Naive thymus-derived CD4-positive, alpha-beta T cell (primary cell): ENCODE measurements at regions of chrX and their contacts with region 1.

Region 1: GRCh38 chrX:42943051-42943974 is 165.3 kb upstream of the PPP1R2C start:
- DNase-seq: peak in 6 of 9 donors; percentile 22 to 50 (median 44)
- ATAC-seq: peak; percentile 60
- H3K4me3 ChIP-seq: peak overlapping the region; percentile 33
- H3K4me3 Mint-ChIP-seq: peak overlapping the region; percentile 41 to 83 (median 70)
- H3K27ac ChIP-seq: peak overlapping the region; percentile 56
- H3K27ac Mint-ChIP-seq: peak overlapping the region; percentile 77 to 98 (median 94)
- H3K4me1 ChIP-seq: peaks cover 58 to 84% of the 10 kb centered on the region in 2 donors
- H3K4me1 Mint-ChIP-seq: peaks cover 21 to 98% (median 88%) of the 10 kb centered on the region in 7 donors
- H3K27me3 ChIP-seq: no peaks in the 10 kb centered on the region
- H3K27me3 Mint-ChIP-seq: no peaks in the 10 kb centered on the region

Region 2: DNA sequence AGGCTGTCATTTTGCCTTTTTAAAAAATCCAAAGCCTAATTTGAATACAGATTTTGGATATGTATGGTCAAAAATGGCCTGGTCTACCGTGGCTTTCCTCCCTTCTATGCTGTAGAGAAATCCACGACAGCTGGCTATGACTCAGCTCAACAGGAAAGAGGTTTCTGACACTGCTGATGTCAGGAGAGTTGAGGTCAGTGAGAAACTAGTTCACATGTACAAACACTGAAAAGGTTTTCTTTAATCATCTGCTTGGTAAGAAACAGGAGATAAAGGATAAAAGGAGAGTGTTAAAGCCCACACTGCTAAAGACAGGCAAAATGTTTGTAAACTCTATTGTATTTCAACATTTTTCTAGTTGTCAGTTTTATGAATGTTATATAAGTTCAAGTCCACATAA is 1382.3 kb before region 1 on chrX:
- CTCF ChIA-PET with region 1: no interaction called
- POLR2A ChIA-PET with region 1: no interaction called
- intact Hi-C with region 1: loop called in 1 of 2 experiments (anchors 5 kb)
- DNase-seq: peak in 1 of 9 donors; percentile 24
- ATAC-seq: peak; percentile 82
- H3K4me3 ChIP-seq: no peak overlapping the region
- H3K4me3 Mint-ChIP-seq: peak overlapping the region in 1 of 10 donors; percentile 50
- H3K27ac ChIP-seq: no peak overlapping the region
- H3K27ac Mint-ChIP-seq: peak overlapping the region in 1 of 9 donors; percentile 81
- H3K4me1 ChIP-seq: peaks cover 0 to 25% of the 10 kb centered on the region in 2 donors
- H3K4me1 Mint-ChIP-seq: peaks cover 7 to 47% (median 29%) of the 10 kb centered on the region in 7 donors
- H3K27me3 ChIP-seq: no peaks in the 10 kb centered on the region
- H3K27me3 Mint-ChIP-seq: no peaks in the 10 kb centered on the region

Region 3: GRCh38 chrX:41796577-41796976 is 1146.7 kb before region 1 on chrX:
- CTCF ChIA-PET with region 1: interaction called, 11 read pairs
- POLR2A ChIA-PET with region 1: interaction called, 5 read pairs
- intact Hi-C with region 1: loop called in 1 of 2 experiments (anchors 1 kb)
- DNase-seq: no peak
- ATAC-seq: no peak
- H3K4me3 ChIP-seq: no peak overlapping the region
- H3K4me3 Mint-ChIP-seq: no peak overlapping the region
- H3K27ac ChIP-seq: no peak overlapping the region
- H3K27ac Mint-ChIP-seq: peak overlapping the region in 2 of 9 donors; percentile 34 to 62
- H3K4me1 ChIP-seq: peaks cover 0 to 4% of the 10 kb centered on the region in 2 donors
- H3K4me1 Mint-ChIP-seq: peaks cover 6 to 34% (median 14%) of the 10 kb centered on the region in 7 donors
- H3K27me3 ChIP-seq: no peaks in the 10 kb centered on the region
- H3K27me3 Mint-ChIP-seq: no peaks in the 10 kb centered on the region

Region 4: GRCh38 chrX:41923257-41923969 is 1019.9 kb before region 1 on chrX and contains the start of gene CASK:
- CTCF ChIA-PET with region 1: no interaction called
- POLR2A ChIA-PET with region 1: interaction called, 10 read pairs
- intact Hi-C with region 1: loop called (anchors 2 to 5 kb)
- DNase-seq: peak; percentile 74 to 91 (median 84)
- ATAC-seq: peak; percentile 92
- H3K4me3 ChIP-seq: peak within 1 kb of the TSS; percentile 78
- H3K4me3 Mint-ChIP-seq: peak within 1 kb of the TSS; percentile 91 to 99 (median 92)
- H3K27ac ChIP-seq: peak within 1 kb of the TSS; percentile 70
- H3K27ac Mint-ChIP-seq: peak within 1 kb of the TSS; percentile 76 to 95 (median 91)
- H3K4me1 ChIP-seq: peaks cover 5% of the 10 kb centered on the region in 2 donors
- H3K4me1 Mint-ChIP-seq: peaks cover 6 to 39% (median 29%) of the 10 kb centered on the region in 7 donors
- H3K27me3 ChIP-seq: no peaks in the 10 kb centered on the region
- H3K27me3 Mint-ChIP-seq: peaks cover 0 to 2% (median 0%) of the 10 kb centered on the region in 5 donors
- total RNA-seq, gene CASK: 31.5 to 72.4 (median 65.0) TPM

Region 5: GRCh38 chrX:42290608-42291007 is 652.7 kb before region 1 on chrX:
- CTCF ChIA-PET with region 1: no interaction called
- POLR2A ChIA-PET with region 1: no interaction called
- intact Hi-C with region 1: loop called in 1 of 2 experiments (anchors 5 kb)
- DNase-seq: peak in 1 of 9 donors; percentile 0
- ATAC-seq: no peak
- H3K4me3 ChIP-seq: no peak overlapping the region
- H3K4me3 Mint-ChIP-seq: no peak overlapping the region
- H3K27ac ChIP-seq: no peak overlapping the region
- H3K27ac Mint-ChIP-seq: no peak overlapping the region
- H3K4me1 ChIP-seq: no peaks in the 10 kb centered on the region
- H3K4me1 Mint-ChIP-seq: peaks cover 0 to 7% (median 0%) of the 10 kb centered on the region in 7 donors
- H3K27me3 ChIP-seq: no peaks in the 10 kb centered on the region
- H3K27me3 Mint-ChIP-seq: no peaks in the 10 kb centered on the region

Region 6: DNA sequence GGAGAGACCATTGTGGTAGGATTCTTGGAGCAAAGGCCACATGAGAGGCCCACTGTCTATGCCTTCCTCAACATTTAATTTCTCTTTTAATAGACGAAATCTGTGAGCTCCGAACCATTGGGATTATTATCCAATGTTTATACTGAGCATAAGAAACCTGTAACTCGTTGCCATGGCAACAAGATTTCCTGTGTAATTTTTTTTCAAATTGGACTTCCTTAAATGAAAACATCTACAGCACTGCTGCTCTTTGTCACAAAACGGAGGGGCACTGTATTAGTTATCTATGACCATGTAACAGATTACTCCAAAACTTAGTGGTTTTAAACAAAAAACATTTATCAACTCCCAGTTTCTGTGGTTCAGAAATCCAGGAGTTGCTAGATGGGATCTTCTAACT is 204.1 kb before region 1 on chrX:
- CTCF ChIA-PET with region 1: no interaction called
- POLR2A ChIA-PET with region 1: no interaction called
- intact Hi-C with region 1: loop called in 1 of 2 experiments (anchors 5 kb)
- DNase-seq: peak in 5 of 9 donors; percentile 18 to 51 (median 40)
- ATAC-seq: no peak
- H3K4me3 ChIP-seq: no peak overlapping the region
- H3K4me3 Mint-ChIP-seq: peak overlapping the region in 7 of 10 donors; percentile 23 to 64 (median 36)
- H3K27ac ChIP-seq: peak overlapping the region; percentile 10
- H3K27ac Mint-ChIP-seq: peak overlapping the region in 8 of 9 donors; percentile 62 to 90 (median 80)
- H3K4me1 ChIP-seq: peaks cover 0 to 4% of the 10 kb centered on the region in 2 donors
- H3K4me1 Mint-ChIP-seq: peaks cover 0 to 31% (median 25%) of the 10 kb centered on the region in 7 donors
- H3K27me3 ChIP-seq: no peaks in the 10 kb centered on the region
- H3K27me3 Mint-ChIP-seq: no peaks in the 10 kb centered on the region

Region 7: DNA sequence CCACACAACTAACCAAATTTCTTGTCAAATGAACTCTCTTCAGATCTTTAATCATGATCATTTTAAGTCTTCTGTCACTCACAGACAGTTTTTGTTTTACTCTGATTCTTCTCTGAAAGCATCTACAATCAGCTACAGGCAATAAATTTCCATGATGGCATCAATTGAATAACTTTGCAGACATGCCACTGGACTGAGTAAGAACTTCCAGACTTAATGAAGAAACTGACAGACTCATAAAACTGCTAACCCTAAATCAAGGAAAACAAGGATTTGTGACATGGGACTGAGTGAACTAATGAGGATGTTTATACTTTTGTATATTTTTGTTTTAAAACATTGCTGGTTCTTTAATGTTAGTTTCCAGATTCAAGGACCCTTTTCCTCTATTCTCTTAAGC is 159.9 kb before region 1 on chrX:
- CTCF ChIA-PET with region 1: no interaction called
- POLR2A ChIA-PET with region 1: no interaction called
- intact Hi-C with region 1: no loop called
- DNase-seq: no peak
- ATAC-seq: no peak
- H3K4me3 ChIP-seq: no peak overlapping the region
- H3K4me3 Mint-ChIP-seq: no peak overlapping the region
- H3K27ac ChIP-seq: no peak overlapping the region
- H3K27ac Mint-ChIP-seq: no peak overlapping the region
- H3K4me1 ChIP-seq: no peaks in the 10 kb centered on the region
- H3K4me1 Mint-ChIP-seq: peaks cover 0 to 5% (median 0%) of the 10 kb centered on the region in 7 donors
- H3K27me3 ChIP-seq: no peaks in the 10 kb centered on the region
- H3K27me3 Mint-ChIP-seq: no peaks in the 10 kb centered on the region

Region 8: DNA sequence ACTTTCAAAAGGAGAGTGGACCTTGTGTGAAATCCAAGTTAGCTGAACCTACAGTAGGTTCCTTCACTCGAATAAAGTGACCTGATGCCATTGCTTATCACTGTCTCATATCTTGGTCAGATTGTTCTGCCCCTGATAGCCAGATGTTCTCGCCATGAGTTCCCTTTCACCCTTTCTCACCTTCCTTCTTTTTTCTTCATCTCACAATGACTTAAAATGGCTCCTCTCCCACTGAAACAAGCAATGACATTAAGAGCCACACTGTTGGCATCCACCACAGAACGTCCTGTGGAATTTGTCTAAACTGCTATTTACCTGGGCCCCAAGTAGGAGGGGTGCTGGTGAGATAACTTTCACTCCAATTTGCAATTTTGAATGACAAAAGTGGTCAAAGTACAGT is 62.2 kb after region 1 on chrX:
- CTCF ChIA-PET with region 1: no interaction called
- POLR2A ChIA-PET with region 1: no interaction called
- intact Hi-C with region 1: no loop called
- DNase-seq: no peak
- ATAC-seq: no peak
- H3K4me3 ChIP-seq: no peak overlapping the region
- H3K4me3 Mint-ChIP-seq: no peak overlapping the region
- H3K27ac ChIP-seq: no peak overlapping the region
- H3K27ac Mint-ChIP-seq: no peak overlapping the region
- H3K4me1 ChIP-seq: no peaks in the 10 kb centered on the region
- H3K4me1 Mint-ChIP-seq: peaks cover 0 to 7% (median 0%) of the 10 kb centered on the region in 7 donors
- H3K27me3 ChIP-seq: no peaks in the 10 kb centered on the region
- H3K27me3 Mint-ChIP-seq: no peaks in the 10 kb centered on the region

Region 9: DNA sequence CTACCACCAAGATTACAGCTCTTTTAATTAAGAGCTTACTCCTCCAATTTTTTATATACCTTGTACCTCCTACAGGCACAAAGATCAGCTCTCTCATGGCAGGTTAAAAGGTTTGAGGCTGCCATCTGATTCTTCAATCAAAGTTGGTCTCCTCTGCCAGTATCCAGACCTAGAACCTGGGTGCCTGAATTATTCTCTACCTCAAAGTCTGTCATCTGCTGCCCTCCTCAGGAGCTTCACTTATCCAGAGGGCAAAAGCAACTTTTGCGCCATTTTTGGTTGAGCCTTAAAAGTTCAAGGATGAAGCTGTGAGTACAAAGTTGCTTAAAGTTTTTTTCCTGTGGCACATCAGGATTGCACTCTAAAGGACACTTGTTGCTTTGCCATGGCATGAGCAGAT is 178.3 kb after region 1 on chrX:
- CTCF ChIA-PET with region 1: no interaction called
- POLR2A ChIA-PET with region 1: no interaction called
- intact Hi-C with region 1: no loop called
- DNase-seq: peak in 5 of 9 donors; percentile 1 to 27 (median 15)
- ATAC-seq: no peak
- H3K4me3 ChIP-seq: no peak overlapping the region
- H3K4me3 Mint-ChIP-seq: no peak overlapping the region
- H3K27ac ChIP-seq: no peak overlapping the region
- H3K27ac Mint-ChIP-seq: peak overlapping the region in 1 of 9 donors; percentile 17
- H3K4me1 ChIP-seq: no peaks in the 10 kb centered on the region
- H3K4me1 Mint-ChIP-seq: peaks cover 0 to 8% (median 3%) of the 10 kb centered on the region in 7 donors
- H3K27me3 ChIP-seq: no peaks in the 10 kb centered on the region
- H3K27me3 Mint-ChIP-seq: no peaks in the 10 kb centered on the region

Region 10: GRCh38 chrX:43255596-43255995 is 312.3 kb after region 1 on chrX:
- CTCF ChIA-PET with region 1: no interaction called
- POLR2A ChIA-PET with region 1: no interaction called
- intact Hi-C with region 1: no loop called
- DNase-seq: no peak
- ATAC-seq: no peak
- H3K4me3 ChIP-seq: no peak overlapping the region
- H3K4me3 Mint-ChIP-seq: no peak overlapping the region
- H3K27ac ChIP-seq: no peak overlapping the region
- H3K27ac Mint-ChIP-seq: no peak overlapping the region
- H3K4me1 ChIP-seq: no peaks in the 10 kb centered on the region
- H3K4me1 Mint-ChIP-seq: no peaks in the 10 kb centered on the region
- H3K27me3 ChIP-seq: no peaks in the 10 kb centered on the region
- H3K27me3 Mint-ChIP-seq: no peaks in the 10 kb centered on the region

Region 11: GRCh38 chrX:43557792-43558191 is 614.5 kb after region 1 on chrX:
- CTCF ChIA-PET with region 1: no interaction called
- POLR2A ChIA-PET with region 1: no interaction called
- intact Hi-C with region 1: loop called in 1 of 2 experiments (anchors 1 kb)
- DNase-seq: peak; percentile 7 to 65 (median 40)
- ATAC-seq: peak; percentile 53
- H3K4me3 ChIP-seq: no peak overlapping the region
- H3K4me3 Mint-ChIP-seq: no peak overlapping the region
- H3K27ac ChIP-seq: no peak overlapping the region
- H3K27ac Mint-ChIP-seq: no peak overlapping the region
- H3K4me1 ChIP-seq: peaks cover 4% of the 10 kb centered on the region in 2 donors
- H3K4me1 Mint-ChIP-seq: peaks cover 0 to 6% (median 0%) of the 10 kb centered on the region in 7 donors
- H3K27me3 ChIP-seq: no peaks in the 10 kb centered on the region
- H3K27me3 Mint-ChIP-seq: no peaks in the 10 kb centered on the region